ENCODE measurements at regions of chr1 and their contacts with region 1.

Region 1: GRCh38 chr1:8169364-8170058 is 143.4 kb upstream of the ERRFI1 start:
- DNase-seq: no peak
- ATAC-seq: peak; percentile 90
- H3K4me3 Mint-ChIP-seq: peak overlapping the region; percentile 58
- H3K27ac Mint-ChIP-seq: peak overlapping the region; percentile 96
- H3K4me1 Mint-ChIP-seq: peaks cover 26% of the 10 kb centered on the region
- H3K27me3 Mint-ChIP-seq: peaks cover 4% of the 10 kb centered on the region

Region 2: DNA sequence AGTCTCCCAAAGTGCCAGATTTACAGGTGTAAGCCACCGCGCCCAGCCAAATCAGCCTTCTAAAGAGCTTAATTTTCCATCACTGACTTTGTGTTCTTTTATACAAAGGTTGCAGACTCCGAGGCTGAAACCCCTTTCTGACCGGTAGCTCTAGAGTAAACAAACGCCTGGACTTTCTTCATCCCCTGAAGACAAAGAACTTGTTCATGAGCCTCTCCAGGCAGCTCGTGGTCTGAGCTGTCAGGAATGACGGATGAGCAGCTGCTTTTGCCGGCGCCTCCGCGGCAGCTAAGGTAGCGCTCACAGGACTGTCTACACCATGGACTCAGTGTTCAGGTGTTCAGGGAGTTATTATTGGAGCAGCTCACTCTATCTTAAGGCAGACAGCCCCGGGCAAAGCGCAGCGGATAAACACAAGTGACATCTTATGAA is 14.9 kb before region 1 on chr1:
- POLR2A ChIA-PET with region 1: interaction called, 41 read pairs
- DNase-seq: no peak
- ATAC-seq: no peak
- H3K4me3 Mint-ChIP-seq: no peak overlapping the region
- H3K27ac Mint-ChIP-seq: no peak overlapping the region
- H3K4me1 Mint-ChIP-seq: peaks cover 34% of the 10 kb centered on the region
- H3K27me3 Mint-ChIP-seq: peaks cover 56% of the 10 kb centered on the region

Region 3: GRCh38 chr1:8182034-8182761 is 12.7 kb after region 1 on chr1:
- POLR2A ChIA-PET with region 1: no interaction called
- DNase-seq: no peak
- ATAC-seq: no peak
- H3K4me3 Mint-ChIP-seq: no peak overlapping the region
- H3K27ac Mint-ChIP-seq: no peak overlapping the region
- H3K4me1 Mint-ChIP-seq: no peaks in the 10 kb centered on the region
- H3K27me3 Mint-ChIP-seq: peaks cover 2% of the 10 kb centered on the region

Region 4: GRCh38 chr1:8197493-8198282 is 28.2 kb after region 1 on chr1:
- POLR2A ChIA-PET with region 1: no interaction called
- DNase-seq: no peak
- ATAC-seq: no peak
- H3K4me3 Mint-ChIP-seq: no peak overlapping the region
- H3K27ac Mint-ChIP-seq: no peak overlapping the region
- H3K4me1 Mint-ChIP-seq: peaks cover 2% of the 10 kb centered on the region
- H3K27me3 Mint-ChIP-seq: peaks cover 21% of the 10 kb centered on the region

Region 5: DNA sequence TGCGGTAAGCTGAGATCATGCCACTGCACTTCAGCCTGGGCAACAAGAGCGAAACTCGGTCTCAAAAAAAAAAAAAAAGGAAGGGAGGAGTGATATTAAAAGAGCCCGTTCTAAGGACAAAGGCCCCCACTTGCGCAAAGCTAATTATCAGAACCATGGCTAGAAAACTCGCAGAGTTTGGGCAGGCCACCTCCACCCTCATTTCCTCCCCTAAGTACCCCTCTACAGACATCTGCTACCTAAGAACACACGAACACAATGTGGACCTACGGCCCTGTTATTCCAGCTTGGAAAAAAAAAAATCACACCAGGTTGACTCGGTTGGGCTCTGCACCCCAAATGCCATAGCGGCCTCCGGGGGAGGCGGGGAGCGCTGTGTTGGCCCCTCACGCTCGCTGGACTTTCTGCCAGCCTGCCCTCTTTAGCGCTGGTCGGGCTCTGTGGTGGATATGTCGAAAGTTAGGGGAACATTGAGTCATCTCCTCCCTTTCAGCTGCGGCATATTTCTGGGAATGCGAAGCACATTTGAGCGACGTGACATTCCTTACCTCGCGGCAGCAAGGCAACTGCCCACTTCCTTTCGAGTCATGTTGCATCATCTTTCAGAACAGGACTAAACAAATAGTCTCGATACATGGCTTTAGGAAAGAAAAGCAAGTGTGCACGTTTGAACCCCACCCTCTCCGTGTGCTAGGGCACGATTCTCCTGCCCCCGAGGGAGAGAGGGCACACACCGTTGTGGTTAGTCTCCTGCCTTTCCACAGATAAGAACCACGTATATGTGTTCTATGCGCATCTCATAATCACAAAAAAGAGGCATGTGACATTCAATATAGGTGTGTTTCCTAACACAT is 42.3 kb after region 1 on chr1:
- POLR2A ChIA-PET with region 1: no interaction called
- DNase-seq: no peak
- ATAC-seq: peak; percentile 45
- H3K4me3 Mint-ChIP-seq: peak overlapping the region; percentile 44
- H3K27ac Mint-ChIP-seq: peak overlapping the region; percentile 70
- H3K4me1 Mint-ChIP-seq: peaks cover 19% of the 10 kb centered on the region
- H3K27me3 Mint-ChIP-seq: peaks cover 34% of the 10 kb centered on the region